H1 (cell line): ENCODE measurements at regions of chr5 and their contacts with region 1.

Region 1: DNA sequence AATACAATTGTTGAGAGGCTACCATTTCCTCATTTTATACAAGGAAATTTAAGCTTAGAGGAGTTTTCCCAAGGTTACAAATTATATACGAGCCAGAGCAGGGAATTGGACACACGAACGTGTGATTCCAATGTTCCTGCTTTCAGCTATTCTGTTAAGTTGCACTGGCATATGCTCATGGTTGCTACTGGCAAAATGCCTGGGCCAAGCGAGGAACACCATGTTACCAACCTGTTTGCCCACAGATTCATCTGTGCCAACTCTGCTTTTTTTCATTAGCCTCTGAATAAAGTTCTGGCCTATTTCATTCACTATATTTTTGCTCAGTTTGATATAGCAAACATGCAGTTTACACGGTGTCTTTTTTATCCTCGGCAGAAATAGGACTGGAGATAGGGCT is 5.1 kb upstream of the C5orf46 start:
- DNase-seq: no peak
- H3K4me3 ChIP-seq: no peak overlapping the region
- H3K27ac ChIP-seq: no peak overlapping the region
- H3K4me1 ChIP-seq: no peaks in the 10 kb centered on the region
- H3K27me3 ChIP-seq: no peaks in the 10 kb centered on the region
- CTCF ChIP-seq: no peak
- EP300 ChIP-seq: no peak
- POLR2A ChIP-seq: no peak
- RAD21 ChIP-seq: no peak

Region 2: DNA sequence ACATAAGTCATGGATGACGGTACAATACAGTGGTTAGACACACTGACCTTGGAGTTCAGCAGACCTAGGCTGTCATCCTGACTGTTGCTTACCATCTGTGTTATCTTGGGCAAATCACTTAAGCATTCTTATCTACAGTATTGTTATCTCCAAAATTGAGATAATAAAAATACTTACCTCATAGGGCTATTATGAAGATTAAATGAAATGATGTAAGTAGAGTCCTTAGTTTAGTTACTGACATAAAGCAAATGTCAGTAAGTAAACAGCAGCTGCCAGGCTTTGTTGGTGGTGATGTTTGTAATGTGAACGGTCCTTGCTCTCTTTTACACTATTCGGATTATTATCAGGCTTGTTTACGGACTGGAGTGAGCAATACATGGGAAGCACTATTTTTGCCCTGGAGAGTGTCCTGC is 294.2 kb before region 1 on chr5:
- CTCF ChIA-PET with region 1: no interaction called
- POLR2A ChIA-PET with region 1: no interaction called
- DNase-seq: no peak
- H3K4me3 ChIP-seq: no peak overlapping the region
- H3K27ac ChIP-seq: no peak overlapping the region
- H3K4me1 ChIP-seq: no peaks in the 10 kb centered on the region; a peak in 1 of 7 replicates
- H3K27me3 ChIP-seq: no peaks in the 10 kb centered on the region
- CTCF ChIP-seq: no peak
- EP300 ChIP-seq: no peak
- POLR2A ChIP-seq: no peak
- RAD21 ChIP-seq: no peak

Region 3: DNA sequence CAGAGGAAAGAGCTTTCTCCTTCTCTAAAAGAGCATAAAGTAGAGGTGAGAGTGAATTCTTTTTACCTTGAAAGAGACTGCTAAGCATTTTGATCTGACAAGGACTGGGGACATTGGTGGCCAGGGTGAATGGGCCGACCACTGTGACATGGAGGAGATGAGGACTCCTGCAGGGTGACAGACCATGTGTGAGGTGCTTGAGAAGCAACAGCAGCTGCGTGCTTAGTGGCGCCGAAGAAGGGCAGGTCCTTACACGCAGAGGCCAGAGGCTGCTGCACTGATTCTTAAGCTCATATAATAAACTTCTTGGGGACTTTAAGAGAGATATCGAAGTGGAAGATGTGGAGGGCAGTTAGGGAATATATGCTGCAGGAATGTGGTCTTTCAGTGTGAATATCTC is 120.2 kb before region 1 on chr5:
- CTCF ChIA-PET with region 1: no interaction called
- POLR2A ChIA-PET with region 1: no interaction called
- DNase-seq: no peak
- H3K4me3 ChIP-seq: no peak overlapping the region
- H3K27ac ChIP-seq: no peak overlapping the region
- H3K4me1 ChIP-seq: no peaks in the 10 kb centered on the region
- H3K27me3 ChIP-seq: no peaks in the 10 kb centered on the region
- CTCF ChIP-seq: no peak
- EP300 ChIP-seq: no peak
- POLR2A ChIP-seq: no peak
- RAD21 ChIP-seq: no peak

Region 4: GRCh38 chr5:147925020-147925419 is 13.6 kb after region 1 on chr5:
- CTCF ChIA-PET with region 1: interaction called, 14 read pairs
- POLR2A ChIA-PET with region 1: no interaction called
- DNase-seq: no peak
- H3K4me3 ChIP-seq: no peak overlapping the region
- H3K27ac ChIP-seq: no peak overlapping the region
- H3K4me1 ChIP-seq: 0 out of 7 replicates have a peak, but pooled peaks cover 0 to 3% (median 0%) of the 10 kb centered on the region in 4 experiments
- H3K27me3 ChIP-seq: no peaks in the 10 kb centered on the region
- CTCF ChIP-seq: no peak
- EP300 ChIP-seq: no peak
- POLR2A ChIP-seq: no peak
- RAD21 ChIP-seq: no peak